Endothelial cell of umbilical vein (primary cell): ENCODE measurements at regions of chrX and their contacts with region 1.

Region 1: GRCh38 chrX:123960042-123960611 is 1.4 kb upstream of the STAG2 start:
- DNase-seq: peak; percentile 95
- H3K4me3 ChIP-seq: peak overlapping the region; percentile 56 to 90 (median 80)
- H3K27ac ChIP-seq: peak overlapping the region; percentile 99
- H3K4me1 ChIP-seq: peaks cover 21% of the 10 kb centered on the region
- H3K27me3 ChIP-seq: no peaks in the 10 kb centered on the region
- CTCF ChIP-seq: peak; percentile 41 to 91
- POLR2A ChIP-seq: no peak

Region 2: GRCh38 chrX:123859846-123860838 is 100.0 kb before region 1 on chrX and contains the start of gene XIAP:
- CTCF ChIA-PET with region 1: no interaction called
- POLR2A ChIA-PET with region 1: no interaction called
- dilution Hi-C with region 1: no loop called
- intact Hi-C with region 1: loop called (anchors 1 kb)
- DNase-seq: peak; percentile 85
- H3K4me3 ChIP-seq: peak within 1 kb of the TSS; percentile 71 to 98 (median 87)
- H3K27ac ChIP-seq: peak within 1 kb of the TSS; percentile 100
- H3K4me1 ChIP-seq: peaks cover 4% of the 10 kb centered on the region
- H3K27me3 ChIP-seq: no peaks in the 10 kb centered on the region
- CTCF ChIP-seq: no peak
- POLR2A ChIP-seq: no peak
- total RNA-seq, gene XIAP: 34.5 and 38.3 TPM in 2 replicates

Region 3: GRCh38 chrX:123884809-123885408 is 75.2 kb before region 1 on chrX:
- CTCF ChIA-PET with region 1: no interaction called
- POLR2A ChIA-PET with region 1: no interaction called
- dilution Hi-C with region 1: no loop called
- intact Hi-C with region 1: loop called (anchors 10 kb)
- DNase-seq: peak; percentile 52
- H3K4me3 ChIP-seq: no peak overlapping the region
- H3K27ac ChIP-seq: no peak overlapping the region
- H3K4me1 ChIP-seq: no peaks in the 10 kb centered on the region
- H3K27me3 ChIP-seq: no peaks in the 10 kb centered on the region
- CTCF ChIP-seq: peak; percentile 20 to 25
- POLR2A ChIP-seq: no peak

Region 4: DNA sequence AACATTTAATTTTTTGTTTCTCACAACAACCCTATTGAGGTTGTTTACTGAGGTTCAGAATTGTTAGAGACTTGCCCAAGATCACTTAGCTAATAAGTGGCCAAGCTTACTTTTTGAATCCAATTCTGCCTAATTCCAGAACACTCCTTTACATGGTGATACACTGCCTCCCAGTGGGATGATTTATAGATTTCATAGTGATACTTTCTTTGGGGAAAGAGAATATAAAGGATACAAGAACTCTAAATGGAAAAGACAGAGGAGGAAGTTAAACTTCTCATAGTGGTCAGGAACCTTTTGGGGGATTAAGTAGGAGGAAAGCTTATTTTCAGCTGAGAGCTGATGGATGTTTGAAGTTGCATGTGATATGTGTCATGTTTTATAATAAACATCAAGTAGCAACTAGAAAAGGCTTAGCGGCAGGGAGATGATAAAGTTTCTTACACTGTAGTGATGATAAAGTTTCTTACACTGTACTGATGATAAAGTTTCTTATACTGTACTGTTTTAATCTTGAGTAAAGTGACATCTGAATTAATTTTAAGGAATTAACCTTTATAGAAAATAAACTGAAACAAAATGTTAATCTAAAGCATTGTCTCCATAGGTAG is 16.7 kb after region 1 on chrX:
- CTCF ChIA-PET with region 1: interaction called, 11 read pairs
- POLR2A ChIA-PET with region 1: no interaction called
- dilution Hi-C with region 1: no loop called
- intact Hi-C with region 1: loop called (anchors 1 kb)
- DNase-seq: peak; percentile 57
- H3K4me3 ChIP-seq: no peak overlapping the region
- H3K27ac ChIP-seq: no peak overlapping the region
- H3K4me1 ChIP-seq: peaks cover 12% of the 10 kb centered on the region
- H3K27me3 ChIP-seq: no peaks in the 10 kb centered on the region
- CTCF ChIP-seq: no peak
- POLR2A ChIP-seq: no peak

Region 5: DNA sequence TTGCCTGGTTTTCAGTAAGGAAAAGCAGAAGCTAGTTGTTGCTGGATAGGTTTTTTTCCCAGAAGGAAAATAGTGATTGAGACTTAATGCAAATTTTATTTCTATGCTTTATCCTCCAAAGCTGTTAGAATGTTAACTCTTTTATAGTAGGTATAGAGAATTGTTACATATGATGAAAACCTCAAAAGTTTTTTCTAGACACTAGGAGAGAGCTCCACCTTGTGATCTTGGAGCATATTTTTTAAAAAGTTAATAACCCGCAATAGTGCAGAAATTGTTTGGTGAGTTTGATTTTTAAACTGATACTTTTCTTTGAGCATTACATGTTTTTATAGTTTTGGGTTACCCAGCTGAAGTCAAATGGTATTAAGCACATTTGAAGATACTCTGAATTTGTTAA is 57.9 kb after region 1 on chrX:
- CTCF ChIA-PET with region 1: interaction called, 7 read pairs
- POLR2A ChIA-PET with region 1: no interaction called
- dilution Hi-C with region 1: no loop called
- intact Hi-C with region 1: loop called (anchors 1 kb)
- DNase-seq: peak; percentile 7
- H3K4me3 ChIP-seq: no peak overlapping the region
- H3K27ac ChIP-seq: no peak overlapping the region
- H3K4me1 ChIP-seq: peaks cover 7% of the 10 kb centered on the region
- H3K27me3 ChIP-seq: no peaks in the 10 kb centered on the region
- CTCF ChIP-seq: no peak
- POLR2A ChIP-seq: no peak

Region 6: GRCh38 chrX:124028182-124028581 is 68.1 kb after region 1 on chrX:
- CTCF ChIA-PET with region 1: no interaction called
- POLR2A ChIA-PET with region 1: no interaction called
- dilution Hi-C with region 1: no loop called
- intact Hi-C with region 1: no loop called
- DNase-seq: no peak
- H3K4me3 ChIP-seq: no peak overlapping the region
- H3K27ac ChIP-seq: no peak overlapping the region
- H3K4me1 ChIP-seq: peaks cover 5% of the 10 kb centered on the region
- H3K27me3 ChIP-seq: no peaks in the 10 kb centered on the region
- CTCF ChIP-seq: no peak
- POLR2A ChIP-seq: no peak

Region 7: DNA sequence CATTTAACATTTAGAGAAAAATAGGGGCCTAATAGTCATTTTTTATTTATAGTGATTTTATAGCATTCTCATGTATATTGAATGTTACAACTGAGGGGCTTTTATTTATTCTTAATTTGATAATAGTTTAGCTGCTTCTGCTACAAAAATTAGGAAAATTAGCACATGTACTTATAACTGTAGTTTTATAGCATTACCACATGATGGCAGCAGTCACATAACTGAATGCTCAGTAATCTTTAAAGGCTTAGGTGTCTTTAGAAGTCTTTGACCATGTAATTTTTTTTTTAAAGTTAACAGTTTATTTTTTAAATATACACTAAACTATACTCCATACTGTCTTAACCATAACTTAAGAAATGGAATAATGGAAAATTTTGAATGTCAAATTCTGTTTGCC is 138.0 kb after region 1 on chrX:
- CTCF ChIA-PET with region 1: no interaction called
- POLR2A ChIA-PET with region 1: no interaction called
- dilution Hi-C with region 1: no loop called
- intact Hi-C with region 1: loop called (anchors 5 kb)
- DNase-seq: peak; percentile 15
- H3K4me3 ChIP-seq: no peak overlapping the region
- H3K27ac ChIP-seq: no peak overlapping the region
- H3K4me1 ChIP-seq: no peaks in the 10 kb centered on the region
- H3K27me3 ChIP-seq: no peaks in the 10 kb centered on the region
- CTCF ChIP-seq: no peak
- POLR2A ChIP-seq: no peak

Region 8: GRCh38 chrX:124211312-124211942 is 251.3 kb after region 1 on chrX:
- CTCF ChIA-PET with region 1: no interaction called
- POLR2A ChIA-PET with region 1: no interaction called
- dilution Hi-C with region 1: no loop called
- intact Hi-C with region 1: loop called (anchors 10 kb)
- DNase-seq: peak; percentile 12
- H3K4me3 ChIP-seq: no peak overlapping the region
- H3K27ac ChIP-seq: no peak overlapping the region
- H3K4me1 ChIP-seq: no peaks in the 10 kb centered on the region
- H3K27me3 ChIP-seq: no peaks in the 10 kb centered on the region
- CTCF ChIP-seq: peak; percentile 14 to 36
- POLR2A ChIP-seq: no peak